ENCODE measurements at regions of chr17 and their contacts with region 1.

Region 1: GRCh38 chr17:76557368-76558197 is 17.7 kb downstream of the PRCD start:
- DNase-seq: peak; percentile 98
- H3K4me3 ChIP-seq: peak overlapping the region; percentile 83 to 92
- H3K27ac ChIP-seq: peak overlapping the region; percentile 71 to 89
- H3K4me1 ChIP-seq: peaks cover 26 to 42% of the 10 kb centered on the region in 2 experiments
- H3K27me3 ChIP-seq: no peaks in the 10 kb centered on the region
- CTCF ChIP-seq: peak; percentile 78
- EP300 ChIP-seq: no peak
- RAD21 ChIP-seq: peak; percentile 50

Region 2: DNA sequence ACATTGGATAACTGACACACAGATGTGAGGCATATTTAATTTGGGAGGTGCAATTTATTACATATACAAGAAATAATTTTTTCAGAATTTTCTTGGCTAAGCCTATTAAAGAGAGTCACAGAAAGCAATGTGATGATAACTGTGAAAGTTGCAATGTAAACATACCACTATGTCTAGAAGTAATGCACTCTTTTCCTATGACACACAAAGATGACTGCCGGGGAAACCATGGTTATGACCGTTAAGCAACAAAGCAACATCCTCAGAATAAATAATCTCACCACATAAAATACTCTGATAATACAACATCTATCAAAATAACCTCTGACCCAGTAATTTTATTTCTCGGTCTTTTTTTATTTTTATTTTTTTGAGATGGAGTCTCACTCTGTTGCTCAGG is 239.0 kb before region 1 on chr17:
- CTCF ChIA-PET with region 1: no interaction called
- POLR2A ChIA-PET with region 1: no interaction called
- DNase-seq: no peak
- H3K4me3 ChIP-seq: no peak overlapping the region
- H3K27ac ChIP-seq: no peak overlapping the region
- H3K4me1 ChIP-seq: peaks cover 0 to 7% of the 10 kb centered on the region in 2 experiments; a peak in 1 of 4 replicates
- H3K27me3 ChIP-seq: no peaks in the 10 kb centered on the region
- CTCF ChIP-seq: no peak
- EP300 ChIP-seq: no peak
- RAD21 ChIP-seq: no peak

Region 3: GRCh38 chr17:76515274-76515949 is 42.2 kb before region 1 on chr17:
- CTCF ChIA-PET with region 1: interaction called, 319 read pairs
- POLR2A ChIA-PET with region 1: no interaction called
- DNase-seq: no peak
- H3K4me3 ChIP-seq: no peak overlapping the region
- H3K27ac ChIP-seq: no peak overlapping the region
- H3K4me1 ChIP-seq: peaks cover 0 to 6% of the 10 kb centered on the region in 2 experiments; a peak in 1 of 4 replicates
- H3K27me3 ChIP-seq: peaks cover 27% of the 10 kb centered on the region; the same call in 1 of the 2 replicates
- CTCF ChIP-seq: no peak
- EP300 ChIP-seq: no peak
- RAD21 ChIP-seq: no peak

Region 4: GRCh38 chr17:76567634-76568432 is 10.2 kb after region 1 on chr17:
- CTCF ChIA-PET with region 1: interaction called, 89 read pairs
- POLR2A ChIA-PET with region 1: interaction called, 20 read pairs
- DNase-seq: peak; percentile 45
- H3K4me3 ChIP-seq: no peak overlapping the region
- H3K27ac ChIP-seq: no peak overlapping the region; a peak in 1 of 4 replicates
- H3K4me1 ChIP-seq: peaks cover 1 to 8% of the 10 kb centered on the region in 2 experiments; a peak in 2 of 4 replicates
- H3K27me3 ChIP-seq: no peaks in the 10 kb centered on the region
- CTCF ChIP-seq: no peak
- EP300 ChIP-seq: no peak
- RAD21 ChIP-seq: no peak

Region 5: GRCh38 chr17:76612977-76613851 is 55.6 kb after region 1 on chr17:
- CTCF ChIA-PET with region 1: interaction called, 12 read pairs
- POLR2A ChIA-PET with region 1: no interaction called
- DNase-seq: no peak
- H3K4me3 ChIP-seq: no peak overlapping the region
- H3K27ac ChIP-seq: no peak overlapping the region
- H3K4me1 ChIP-seq: no peaks in the 10 kb centered on the region; a peak in 1 of 4 replicates
- H3K27me3 ChIP-seq: no peaks in the 10 kb centered on the region; the same call in 1 of the 2 replicates
- CTCF ChIP-seq: no peak
- EP300 ChIP-seq: no peak
- RAD21 ChIP-seq: no peak

Region 6: GRCh38 chr17:76681222-76682137 is 123.9 kb after region 1 on chr17:
- CTCF ChIA-PET with region 1: interaction called, 116 read pairs
- POLR2A ChIA-PET with region 1: interaction called, 4 read pairs
- DNase-seq: peak; percentile 89
- H3K4me3 ChIP-seq: no peak overlapping the region; a peak in 1 of 4 replicates
- H3K27ac ChIP-seq: peak overlapping the region in 1 of 2 experiments; percentile 23; a peak in 1 of 4 replicates
- H3K4me1 ChIP-seq: peaks cover 0 to 23% of the 10 kb centered on the region in 2 experiments; a peak in 1 of 4 replicates
- H3K27me3 ChIP-seq: no peaks in the 10 kb centered on the region
- CTCF ChIP-seq: peak; percentile 95
- EP300 ChIP-seq: no peak
- RAD21 ChIP-seq: peak; percentile 95